Dendritic cell treated with granulocyte-macrophage colony-stimulating factor and Interleukin-4, amounts not matched to agents 40 ng/mL and 50 ng/mL, for 4 days (primary cell): ENCODE measurements at regions of chr11 and their contacts with region 1.

Region 1: DNA sequence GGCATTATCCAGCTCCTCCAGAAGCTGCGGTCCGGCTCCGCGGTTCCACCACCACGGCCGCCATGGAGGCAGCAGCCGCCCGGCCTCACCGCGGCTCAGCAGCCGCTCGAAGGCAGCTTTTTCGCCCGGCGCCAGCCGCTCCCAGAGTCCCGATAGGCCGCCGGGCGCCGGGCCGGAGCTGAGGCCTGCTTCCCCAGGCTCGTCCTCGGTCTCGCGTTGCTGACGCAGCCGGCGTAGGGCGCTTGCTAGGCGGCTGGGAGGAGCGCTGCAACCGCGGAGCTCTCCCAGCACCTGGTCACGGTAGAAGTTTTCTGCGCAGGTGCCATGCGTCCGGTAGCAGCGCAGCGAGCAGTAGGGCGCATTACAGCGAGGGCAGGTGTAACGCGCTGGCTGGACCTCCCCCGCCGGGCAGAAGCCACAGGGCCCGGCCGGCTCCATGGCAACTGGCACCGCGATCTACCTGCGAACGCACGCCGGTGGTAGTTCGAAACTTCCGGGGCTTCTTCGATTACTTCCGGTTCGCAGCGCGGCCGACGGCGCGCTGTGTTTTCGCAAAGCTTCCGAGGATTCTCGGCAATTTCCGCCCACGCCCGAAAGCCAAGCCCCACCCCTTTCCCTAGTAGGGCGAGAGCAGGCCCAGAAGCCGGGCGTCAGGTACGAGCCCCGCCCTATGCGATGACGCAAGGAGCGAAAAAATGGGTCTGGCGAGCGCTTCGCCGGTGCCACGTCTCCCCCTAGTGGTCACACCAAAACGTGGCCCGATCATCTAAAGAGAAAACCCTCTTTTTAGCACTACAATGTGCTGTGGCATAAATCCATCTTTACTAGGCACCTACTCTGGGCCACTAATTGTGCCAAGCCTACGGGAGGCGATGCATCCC is at the start of gene ZNHIT2:
- H3K4me3 Mint-ChIP-seq: peak within 1 kb of the TSS; percentile 84
- H3K27ac Mint-ChIP-seq: peak within 1 kb of the TSS; percentile 99
- H3K4me1 Mint-ChIP-seq: peaks cover 60% of the 10 kb centered on the region
- H3K27me3 Mint-ChIP-seq: peaks cover 21% of the 10 kb centered on the region

Region 2: DNA sequence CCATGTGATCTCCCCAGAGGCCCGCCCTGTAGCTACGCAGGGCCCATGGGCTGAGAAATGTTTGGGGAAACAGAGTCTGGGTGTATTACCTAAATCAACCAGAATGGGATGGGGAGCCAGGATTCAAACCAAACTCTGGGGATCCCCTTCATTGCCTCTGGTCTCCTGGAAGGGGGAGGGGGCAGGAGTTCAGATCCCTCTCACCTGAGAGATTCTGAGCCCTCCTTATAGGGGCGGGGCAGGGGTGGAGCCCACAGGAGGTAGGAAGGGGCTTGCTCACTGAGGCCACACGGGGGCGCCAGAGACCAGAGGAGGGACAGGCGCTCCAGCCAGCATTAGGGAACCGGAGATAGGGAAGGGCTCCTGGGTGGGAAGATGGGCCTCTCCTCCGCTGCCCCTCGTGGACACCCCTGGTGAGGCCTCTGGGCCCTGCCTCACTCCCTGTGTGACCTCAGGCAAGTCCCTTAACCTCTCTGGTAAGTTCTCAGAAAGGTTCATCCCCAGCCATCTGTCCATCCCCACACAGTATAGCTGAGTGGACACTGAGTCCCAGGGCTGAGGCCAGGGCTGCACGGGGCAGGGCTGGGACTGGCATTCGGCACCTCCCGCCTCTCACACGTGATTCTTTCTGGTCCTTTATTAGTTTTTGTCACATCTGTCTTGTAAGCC is 270.3 kb before region 1 on chr11:
- intact Hi-C with region 1: loop called (anchors 5 kb)
- H3K4me3 Mint-ChIP-seq: no peak overlapping the region
- H3K27ac Mint-ChIP-seq: no peak overlapping the region
- H3K4me1 Mint-ChIP-seq: peaks cover 52% of the 10 kb centered on the region
- H3K27me3 Mint-ChIP-seq: peaks cover 30% of the 10 kb centered on the region

Region 3: DNA sequence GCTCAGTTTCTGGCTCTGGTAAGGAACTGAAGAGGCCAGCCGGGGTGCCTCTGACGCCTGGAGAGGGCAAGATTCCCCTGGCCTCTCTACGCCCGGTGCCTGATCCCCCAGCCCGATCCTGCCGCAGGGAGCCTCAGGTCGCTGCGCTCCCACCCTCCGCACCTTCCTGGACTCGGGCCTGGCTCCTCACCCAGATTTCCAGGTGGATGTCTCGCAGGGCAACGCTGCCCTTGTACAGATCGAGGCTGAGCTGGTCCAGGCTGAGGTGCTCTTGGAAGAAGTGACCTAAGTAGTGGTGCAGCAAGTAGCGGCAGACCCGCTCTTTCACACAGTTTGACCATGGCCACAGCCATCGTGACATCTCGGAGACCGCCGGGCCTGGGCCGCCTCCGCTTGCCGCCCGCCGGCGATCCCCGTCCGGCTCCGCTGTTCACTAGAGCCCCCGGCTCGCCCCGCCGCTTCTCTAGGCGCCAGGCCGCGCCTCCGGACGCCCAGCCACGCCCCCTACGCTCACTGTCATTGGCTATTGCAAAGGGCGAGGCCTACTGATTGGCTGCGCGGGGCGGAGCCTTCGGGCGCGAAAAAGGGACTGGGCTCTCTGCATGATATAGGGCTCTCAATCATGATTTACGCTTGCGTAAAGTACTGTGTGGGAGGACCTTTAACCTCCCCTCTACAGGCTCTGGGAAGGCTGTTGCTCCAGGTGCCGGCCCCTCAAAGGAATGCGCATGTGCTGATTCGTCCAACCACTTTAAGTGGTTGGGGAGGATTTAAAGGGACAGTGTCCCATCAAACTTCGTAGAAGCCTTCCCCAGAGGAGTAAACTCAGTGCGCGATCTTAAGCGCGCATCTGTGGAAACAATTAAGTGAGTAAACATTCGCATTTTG is 200.4 kb before region 1 on chr11 and contains the start of gene ATG2A:
- intact Hi-C with region 1: loop called (anchors 10 kb)
- H3K4me3 Mint-ChIP-seq: peak within 1 kb of the TSS; percentile 92
- H3K27ac Mint-ChIP-seq: peak within 1 kb of the TSS; percentile 84
- H3K4me1 Mint-ChIP-seq: peaks cover 27% of the 10 kb centered on the region
- H3K27me3 Mint-ChIP-seq: no peaks in the 10 kb centered on the region

Region 4: GRCh38 chr11:65013692-65014145 is 103.7 kb before region 1 on chr11:
- intact Hi-C with region 1: loop called (anchors 1 kb)
- H3K4me3 Mint-ChIP-seq: peak overlapping the region; percentile 89
- H3K27ac Mint-ChIP-seq: peak overlapping the region; percentile 97
- H3K4me1 Mint-ChIP-seq: peaks cover 31% of the 10 kb centered on the region
- H3K27me3 Mint-ChIP-seq: no peaks in the 10 kb centered on the region

Region 5: DNA sequence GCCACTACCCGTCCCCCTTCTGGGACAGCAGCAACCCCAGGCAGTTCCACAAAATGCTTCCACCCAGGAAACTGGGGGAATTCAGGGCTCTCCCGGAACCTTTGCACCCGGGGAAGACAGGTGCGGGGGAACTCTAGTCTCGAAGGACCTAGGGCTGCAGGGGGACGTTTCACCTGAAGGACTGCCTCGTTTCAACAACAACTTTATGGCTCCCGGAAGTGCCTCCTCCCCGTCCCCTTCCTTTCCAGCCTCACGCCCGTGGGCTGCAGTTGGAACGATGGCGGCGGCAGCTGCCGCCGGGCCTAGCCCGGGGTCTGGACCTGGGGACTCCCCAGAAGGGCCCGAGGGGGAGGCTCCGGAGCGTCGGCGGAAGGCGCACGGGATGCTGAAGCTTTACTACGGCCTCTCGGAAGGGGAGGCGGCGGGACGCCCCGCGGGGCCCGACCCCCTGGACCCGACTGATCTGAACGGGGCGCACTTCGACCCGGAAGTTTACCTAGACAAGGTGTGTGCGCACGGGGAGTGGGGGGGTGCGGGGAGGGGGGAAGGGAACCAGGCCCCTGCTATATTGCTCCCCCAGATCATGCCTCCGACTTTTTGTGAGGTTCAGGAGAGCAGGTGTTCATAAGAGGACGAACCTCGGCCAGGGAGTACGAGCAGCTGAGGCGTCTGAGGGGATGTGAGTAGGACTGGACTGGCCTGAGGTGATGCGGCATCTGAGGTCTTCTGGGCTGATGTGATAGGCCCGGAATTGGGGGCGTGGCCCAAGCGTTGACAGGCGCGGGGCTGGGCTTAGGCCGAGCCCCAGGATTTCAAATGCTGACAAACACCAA is 21.3 kb before region 1 on chr11 and contains the start of gene VPS51:
- intact Hi-C with region 1: loop called (anchors 1 kb)
- H3K4me3 Mint-ChIP-seq: peak within 1 kb of the TSS; percentile 79
- H3K27ac Mint-ChIP-seq: peak within 1 kb of the TSS; percentile 79
- H3K4me1 Mint-ChIP-seq: peaks cover 18% of the 10 kb centered on the region
- H3K27me3 Mint-ChIP-seq: no peaks in the 10 kb centered on the region

Region 6: GRCh38 chr11:65251476-65251875 is 134.0 kb after region 1 on chr11:
- intact Hi-C with region 1: loop called (anchors 10 kb)
- H3K4me3 Mint-ChIP-seq: no peak overlapping the region
- H3K27ac Mint-ChIP-seq: no peak overlapping the region
- H3K4me1 Mint-ChIP-seq: no peaks in the 10 kb centered on the region
- H3K27me3 Mint-ChIP-seq: peaks cover 1% of the 10 kb centered on the region